A673 (cell line): ENCODE measurements at regions of chr1 and their contacts with region 1.

Region 1: DNA sequence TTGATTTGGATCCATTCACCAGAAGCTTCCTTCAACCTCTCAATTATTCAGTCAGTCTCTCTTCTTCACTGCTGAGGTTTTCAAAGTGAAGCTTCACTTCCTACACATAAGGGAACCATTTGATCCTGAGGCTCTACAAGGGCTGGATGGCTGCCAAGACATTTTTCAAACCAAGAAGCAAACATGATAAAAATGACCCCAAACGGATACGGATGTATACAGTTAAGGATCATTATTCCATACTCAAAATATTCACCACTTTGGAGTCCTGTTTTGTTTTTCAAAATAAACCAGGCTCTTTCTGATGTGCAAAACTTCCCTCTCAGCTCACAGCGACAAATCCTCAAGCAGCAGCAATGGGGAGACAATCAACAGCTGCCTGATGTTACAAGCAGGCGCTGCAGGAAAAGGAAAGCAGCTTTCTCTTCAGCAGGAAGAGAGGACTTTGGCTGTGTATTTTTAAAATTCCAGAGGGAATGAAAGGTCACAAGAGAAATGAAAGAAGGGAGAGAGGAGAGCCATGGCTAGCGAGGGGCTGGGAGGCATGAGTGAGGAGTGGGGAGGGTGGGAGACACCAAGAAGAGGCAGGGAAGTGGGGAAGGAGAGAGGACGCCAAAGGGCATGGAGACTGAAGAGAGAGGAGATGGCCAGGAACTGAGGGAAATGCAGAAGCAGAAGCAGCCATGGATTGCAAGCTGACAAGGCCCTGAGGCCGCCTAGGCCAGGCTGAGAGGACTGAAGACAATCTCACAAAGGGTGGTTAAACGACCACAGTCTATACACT is 145.4 kb downstream of the SLC45A1 start:
- DNase-seq: peak; percentile 89
- H3K4me3 ChIP-seq: peak overlapping the region; percentile 17
- H3K27ac ChIP-seq: peak overlapping the region; percentile 89
- H3K4me1 ChIP-seq: peaks cover 93% of the 10 kb centered on the region
- H3K27me3 ChIP-seq: no peaks in the 10 kb centered on the region
- CTCF ChIP-seq: no peak

Region 2: DNA sequence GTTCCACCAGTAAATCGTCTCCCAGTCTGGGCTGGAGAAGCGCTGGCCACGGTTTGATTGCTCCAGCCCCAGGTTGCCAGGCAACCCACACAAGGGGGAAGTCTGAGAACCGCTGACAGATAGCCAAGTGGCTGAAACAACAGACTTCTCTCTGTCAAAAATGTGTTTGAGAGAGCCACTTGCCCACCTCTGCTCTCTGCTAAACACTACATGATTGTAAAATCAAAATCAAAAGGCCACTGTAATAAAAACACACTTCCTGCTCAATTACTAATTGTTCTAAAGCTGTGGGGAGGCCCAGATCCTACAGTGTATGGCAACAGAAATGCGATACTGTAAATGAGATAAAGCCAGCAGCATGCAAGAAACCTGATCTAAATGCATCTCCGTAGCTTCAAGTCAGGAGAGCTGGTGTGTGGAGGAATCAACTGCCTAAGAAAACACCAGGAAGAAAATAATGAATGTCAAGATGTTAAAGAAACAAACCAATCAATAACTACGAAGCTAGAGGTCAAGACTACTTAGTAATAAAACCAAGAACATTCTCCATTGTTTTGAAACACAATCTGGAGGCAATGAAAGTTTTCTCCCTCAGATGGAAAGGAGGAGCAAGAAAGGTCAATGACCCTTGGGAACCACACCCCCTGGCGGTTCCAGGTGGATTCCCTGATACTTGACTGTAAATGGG is 24.2 kb before region 1 on chr1:
- CTCF ChIA-PET with region 1: no interaction called
- POLR2A ChIA-PET with region 1: interaction called, 10 read pairs
- intact Hi-C with region 1: no loop called
- DNase-seq: peak; percentile 84
- H3K4me3 ChIP-seq: no peak overlapping the region
- H3K27ac ChIP-seq: peak overlapping the region; percentile 32
- H3K4me1 ChIP-seq: peaks cover 27% of the 10 kb centered on the region
- H3K27me3 ChIP-seq: no peaks in the 10 kb centered on the region
- CTCF ChIP-seq: no peak

Region 3: DNA sequence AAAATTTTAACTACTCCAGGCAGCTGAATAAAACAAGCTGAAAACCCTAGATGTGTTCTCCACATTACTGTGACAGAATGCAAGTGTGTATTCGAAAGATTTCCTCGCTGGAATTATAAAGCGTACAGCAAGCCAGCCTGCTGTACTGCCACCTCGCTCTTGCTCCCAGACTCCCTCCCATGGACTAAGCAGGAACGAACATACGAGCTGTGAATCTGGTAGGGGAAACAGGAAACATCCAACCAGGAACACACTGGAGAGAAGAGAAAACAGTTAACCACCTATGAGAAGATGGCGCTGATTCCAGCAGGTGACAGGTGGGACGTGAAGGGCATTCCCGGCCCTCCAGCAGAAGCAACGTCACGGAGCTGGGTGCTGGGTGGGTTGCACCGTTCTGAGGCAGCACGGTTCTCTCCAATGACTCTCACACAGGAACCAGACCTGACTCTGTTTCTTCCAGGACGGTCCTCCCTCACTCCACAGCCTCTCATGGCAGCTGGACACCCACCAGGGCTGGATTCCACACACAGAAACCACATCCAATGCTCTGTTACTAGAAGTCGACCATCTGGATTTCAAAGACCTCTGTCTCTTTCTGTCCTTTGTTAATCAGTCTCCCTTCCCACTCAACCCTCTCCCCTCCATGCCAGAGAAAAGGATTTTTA is 134.9 kb after region 1 on chr1:
- CTCF ChIA-PET with region 1: no interaction called
- POLR2A ChIA-PET with region 1: no interaction called
- intact Hi-C with region 1: loop called (anchors 5 kb)
- DNase-seq: peak; percentile 90
- H3K4me3 ChIP-seq: peak overlapping the region; percentile 16
- H3K27ac ChIP-seq: peak overlapping the region; percentile 98
- H3K4me1 ChIP-seq: peaks cover 88% of the 10 kb centered on the region
- H3K27me3 ChIP-seq: no peaks in the 10 kb centered on the region
- CTCF ChIP-seq: peak; percentile 77

Region 4: DNA sequence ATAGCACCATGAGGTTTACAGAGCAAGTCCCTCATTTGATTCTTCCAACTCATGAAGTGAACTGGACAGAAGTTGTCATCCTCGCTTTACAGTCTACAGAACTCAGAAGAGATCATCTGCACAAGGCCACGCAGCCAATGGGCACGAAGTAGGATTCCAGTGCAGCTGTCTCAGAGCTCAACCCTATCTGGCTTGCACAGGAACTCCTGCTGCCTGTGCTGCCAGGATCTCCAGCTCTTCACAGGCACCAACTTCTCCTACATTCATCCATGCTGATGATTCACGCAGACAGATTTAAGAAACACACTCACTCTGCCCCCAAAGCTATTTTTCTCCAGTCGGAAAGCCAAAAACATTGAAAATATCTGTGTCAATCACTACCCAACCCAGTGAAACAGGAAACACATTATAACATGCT is 197.1 kb after region 1 on chr1:
- CTCF ChIA-PET with region 1: no interaction called
- POLR2A ChIA-PET with region 1: no interaction called
- intact Hi-C with region 1: loop called (anchors 10 kb)
- DNase-seq: peak; percentile 92
- H3K4me3 ChIP-seq: peak overlapping the region; percentile 5
- H3K27ac ChIP-seq: peak overlapping the region; percentile 95
- H3K4me1 ChIP-seq: peaks cover 61% of the 10 kb centered on the region
- H3K27me3 ChIP-seq: no peaks in the 10 kb centered on the region
- CTCF ChIP-seq: no peak

Region 5: GRCh38 chr1:8712413-8713231 is 249.3 kb after region 1 on chr1:
- CTCF ChIA-PET with region 1: no interaction called
- POLR2A ChIA-PET with region 1: no interaction called
- intact Hi-C with region 1: loop called (anchors 10 kb)
- DNase-seq: peak; percentile 91
- H3K4me3 ChIP-seq: peak overlapping the region; percentile 11
- H3K27ac ChIP-seq: peak overlapping the region; percentile 81
- H3K4me1 ChIP-seq: peaks cover 49% of the 10 kb centered on the region
- H3K27me3 ChIP-seq: no peaks in the 10 kb centered on the region
- CTCF ChIP-seq: no peak

Region 6: DNA sequence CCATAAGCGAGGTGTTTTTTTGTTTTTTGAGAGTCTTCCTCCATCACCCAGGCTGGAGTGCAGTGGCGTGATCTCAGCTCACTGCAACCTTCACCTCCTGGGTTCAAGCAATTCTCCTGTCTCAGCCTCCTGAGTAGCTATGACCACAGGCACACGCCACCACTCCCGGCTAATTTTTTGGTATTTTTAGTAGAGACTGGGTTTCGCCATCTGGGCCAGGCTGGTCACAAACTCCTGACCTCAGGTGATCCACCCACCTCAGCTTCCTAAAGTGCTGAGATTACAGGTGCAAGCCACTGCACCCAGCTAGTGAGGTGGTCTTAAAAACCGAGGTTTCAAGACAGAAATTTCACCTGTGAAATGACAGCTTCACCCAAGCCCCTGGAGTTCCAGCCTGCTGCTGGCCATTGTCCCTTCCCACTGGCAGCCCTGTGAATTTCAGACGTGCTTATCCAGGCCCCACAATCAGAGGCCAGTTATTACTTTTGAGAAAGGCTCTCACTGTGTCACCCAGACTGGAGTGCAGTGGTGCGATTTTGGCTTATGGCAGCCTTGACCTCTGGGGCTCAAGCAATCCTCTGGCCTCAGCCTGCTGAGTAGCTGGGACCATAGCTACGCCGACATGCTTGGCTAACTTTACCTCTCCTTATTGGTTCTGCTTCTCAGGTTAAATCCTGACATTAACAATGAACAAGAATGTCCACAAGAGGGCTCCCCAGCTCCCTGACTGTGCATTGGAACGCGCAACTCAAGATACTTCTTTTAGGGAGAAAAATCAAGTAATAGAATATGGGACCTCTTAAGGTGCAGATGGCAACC is 395.8 kb after region 1 on chr1:
- CTCF ChIA-PET with region 1: no interaction called
- POLR2A ChIA-PET with region 1: no interaction called
- intact Hi-C with region 1: loop called (anchors 10 kb)
- DNase-seq: peak; percentile 80
- H3K4me3 ChIP-seq: no peak overlapping the region
- H3K27ac ChIP-seq: no peak overlapping the region
- H3K4me1 ChIP-seq: no peaks in the 10 kb centered on the region
- H3K27me3 ChIP-seq: no peaks in the 10 kb centered on the region
- CTCF ChIP-seq: peak; percentile 81